ENCODE measurements at regions of chr2 and their contacts with region 1.

Region 1: DNA sequence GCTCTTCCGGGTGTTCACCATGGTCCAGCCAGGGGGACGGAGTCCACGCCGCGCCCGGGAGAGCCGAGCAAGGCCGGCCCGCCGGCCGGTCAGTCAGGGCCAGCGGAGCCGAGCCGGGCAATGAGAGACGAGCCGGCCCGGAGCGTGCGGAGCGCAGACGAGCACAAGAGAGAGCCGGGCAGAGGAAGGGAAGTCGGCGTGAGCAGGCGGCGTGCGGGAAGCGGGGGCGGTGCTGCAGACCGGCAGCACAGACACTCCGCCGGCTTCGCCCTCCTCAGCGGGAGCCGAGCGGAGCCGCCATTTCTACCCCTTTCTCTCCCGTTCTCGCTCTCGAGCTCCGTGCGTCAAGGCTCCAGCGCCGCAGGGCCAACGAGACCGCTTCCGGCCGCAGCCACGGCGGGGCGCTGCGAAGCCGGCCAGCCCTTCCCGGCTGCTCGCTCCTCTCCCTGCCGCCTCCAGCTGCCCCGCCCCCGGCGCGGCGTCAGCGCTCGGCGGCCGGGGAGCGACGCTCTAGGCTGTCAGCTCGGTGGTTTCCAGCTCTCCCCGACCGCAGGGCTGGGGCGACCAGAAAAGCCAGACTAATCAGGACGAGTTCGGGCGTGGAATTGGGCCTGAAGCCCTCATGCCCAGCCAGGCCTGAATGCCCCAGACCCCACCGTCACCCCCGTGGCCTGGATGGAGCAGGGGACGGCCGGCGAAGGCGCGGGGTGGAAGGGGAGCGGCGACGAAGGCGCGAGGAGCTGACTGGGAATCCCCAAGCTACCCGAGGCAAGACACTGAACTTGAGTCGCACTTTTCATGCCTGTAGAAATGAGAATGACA is at the start of gene ATAD2B:
- DNase-seq: peak; percentile 99
- H3K4me3 ChIP-seq: peak within 1 kb of the TSS; percentile 84 to 97
- H3K27ac ChIP-seq: peak within 1 kb of the TSS; percentile 94 to 95
- H3K4me1 ChIP-seq: peaks cover 8 to 13% of the 10 kb centered on the region in 2 experiments; a peak in 3 of 4 replicates
- H3K27me3 ChIP-seq: no peaks in the 10 kb centered on the region
- CTCF ChIP-seq: peak; percentile 87
- EP300 ChIP-seq: peak; percentile 23 to 58; a peak in 3 of 4 replicates
- RAD21 ChIP-seq: peak; percentile 84
- polyA plus RNA-seq, gene ATAD2B: 1.3 and 1.7 TPM in 2 replicates

Region 2: GRCh38 chr2:23835988-23836387 is 91.0 kb before region 1 on chr2:
- CTCF ChIA-PET with region 1: interaction called, 10 read pairs
- POLR2A ChIA-PET with region 1: no interaction called
- DNase-seq: no peak
- H3K4me3 ChIP-seq: no peak overlapping the region
- H3K27ac ChIP-seq: no peak overlapping the region
- H3K4me1 ChIP-seq: no peaks in the 10 kb centered on the region
- H3K27me3 ChIP-seq: no peaks in the 10 kb centered on the region
- CTCF ChIP-seq: no peak
- EP300 ChIP-seq: no peak
- RAD21 ChIP-seq: no peak

Region 3: GRCh38 chr2:23916727-23917405 is 10.1 kb before region 1 on chr2:
- CTCF ChIA-PET with region 1: interaction called, 11 read pairs
- POLR2A ChIA-PET with region 1: no interaction called
- DNase-seq: peak; percentile 39
- H3K4me3 ChIP-seq: no peak overlapping the region
- H3K27ac ChIP-seq: peak overlapping the region; percentile 49 to 55
- H3K4me1 ChIP-seq: peaks cover 4 to 12% of the 10 kb centered on the region in 2 experiments
- H3K27me3 ChIP-seq: no peaks in the 10 kb centered on the region
- CTCF ChIP-seq: no peak
- EP300 ChIP-seq: no peak
- RAD21 ChIP-seq: no peak

Region 4: DNA sequence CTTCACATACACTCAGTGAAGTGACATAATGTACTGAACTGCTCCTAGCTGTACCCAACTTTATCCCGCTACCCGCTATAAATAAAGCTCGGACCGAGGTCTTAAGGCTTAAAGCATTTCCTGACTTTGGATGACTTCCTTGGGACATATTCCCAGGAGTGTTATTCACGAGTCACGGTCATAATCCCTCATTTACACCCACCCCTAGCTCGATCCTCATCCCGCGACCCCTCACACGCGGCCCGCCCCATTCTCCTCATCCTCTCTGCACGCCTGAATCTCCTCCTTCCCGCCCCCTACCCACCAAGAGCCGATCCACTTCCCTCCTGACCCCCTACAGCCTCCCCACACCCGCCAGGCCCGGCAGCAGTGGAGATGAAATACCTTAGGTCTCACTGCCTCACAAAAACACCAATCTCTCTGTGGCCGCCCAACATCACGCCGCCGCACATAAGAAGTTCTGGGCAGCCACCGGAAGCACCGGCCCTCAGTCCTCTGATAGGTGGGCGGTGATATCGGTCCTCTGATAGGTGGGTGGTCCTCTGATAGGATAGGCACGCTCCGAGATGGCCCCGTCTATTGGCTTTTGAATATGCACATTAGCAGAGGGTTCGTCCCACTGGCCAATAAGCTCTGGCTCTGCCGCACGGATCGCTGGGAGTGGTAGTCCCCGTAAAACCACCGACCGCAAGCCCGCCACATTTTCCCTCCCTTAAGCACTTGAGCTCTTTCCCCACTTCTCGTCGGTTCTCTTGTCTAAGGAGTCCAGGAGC is 120.2 kb after region 1 on chr2 and contains the start of gene WDCP:
- CTCF ChIA-PET with region 1: interaction called, 38 read pairs
- POLR2A ChIA-PET with region 1: interaction called, 13 read pairs
- DNase-seq: peak; percentile 93
- H3K4me3 ChIP-seq: peak within 1 kb of the TSS; percentile 75 to 89
- H3K27ac ChIP-seq: peak within 1 kb of the TSS; percentile 54 to 74; a peak in 3 of 4 replicates
- H3K4me1 ChIP-seq: peaks cover 3 to 16% of the 10 kb centered on the region in 2 experiments; a peak in 2 of 4 replicates
- H3K27me3 ChIP-seq: no peaks in the 10 kb centered on the region
- CTCF ChIP-seq: no peak
- EP300 ChIP-seq: no peak
- RAD21 ChIP-seq: no peak
- polyA plus RNA-seq, gene WDCP: 7.1 and 11.9 TPM in 2 replicates

Region 5: DNA sequence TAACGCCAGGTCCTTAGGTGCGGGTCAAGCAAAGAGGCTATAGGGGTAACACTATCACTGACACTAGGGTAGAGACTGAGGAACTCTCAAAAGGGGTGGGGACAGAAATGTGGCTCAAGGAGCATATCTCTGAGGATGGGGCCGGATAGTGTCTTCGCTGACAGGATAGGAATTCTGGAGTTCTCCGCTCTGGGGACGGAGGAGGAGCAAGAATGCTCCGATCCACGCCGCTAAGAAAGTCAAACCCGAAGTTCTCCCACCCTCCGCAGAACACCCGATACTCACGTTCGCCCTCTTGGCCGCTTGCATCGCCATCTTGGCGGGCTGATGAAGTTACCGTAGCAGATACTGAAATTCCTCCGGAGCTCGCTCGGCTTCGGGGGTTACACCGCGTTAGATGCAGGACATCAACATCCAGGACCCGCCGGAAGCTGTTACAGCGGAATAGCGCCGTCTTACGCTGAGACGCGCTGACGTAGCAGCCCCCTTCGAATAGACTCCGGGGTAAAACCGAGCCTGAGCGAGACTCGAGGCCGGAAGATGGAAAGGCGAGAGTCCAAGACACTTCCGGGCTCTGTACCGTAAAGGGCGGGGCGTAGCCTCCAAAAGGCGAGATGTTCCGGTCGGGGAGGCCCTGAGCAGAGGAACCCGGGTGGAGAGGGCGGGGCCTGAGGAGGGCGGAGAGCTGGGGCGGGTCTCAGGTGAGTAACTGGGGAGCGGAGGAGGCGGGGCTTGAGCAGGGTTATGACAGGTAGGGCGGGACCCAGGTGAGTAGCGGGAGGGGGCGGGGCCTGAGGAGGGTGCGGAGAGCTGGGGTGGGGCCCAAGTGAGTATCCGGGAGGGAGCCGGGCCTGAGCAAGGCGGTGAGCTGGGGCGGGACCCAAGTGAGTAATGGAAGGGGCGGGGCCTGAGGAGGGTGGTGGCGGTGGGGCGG is 149.2 kb after region 1 on chr2 and contains the start of gene SF3B6:
- CTCF ChIA-PET with region 1: interaction called, 34 read pairs
- POLR2A ChIA-PET with region 1: interaction called, 25 read pairs
- DNase-seq: peak; percentile 96
- H3K4me3 ChIP-seq: peak within 1 kb of the TSS; percentile 82
- H3K27ac ChIP-seq: peak within 1 kb of the TSS; percentile 79 to 91
- H3K4me1 ChIP-seq: peaks cover 7% of the 10 kb centered on the region in 2 experiments; a peak in 2 of 4 replicates
- H3K27me3 ChIP-seq: no peaks in the 10 kb centered on the region
- CTCF ChIP-seq: no peak
- EP300 ChIP-seq: peak; percentile 63 to 67; a peak in 2 of 4 replicates
- RAD21 ChIP-seq: no peak
- polyA plus RNA-seq, gene SF3B6: 275 and 295 TPM in 2 replicates

Measured in SK-N-SH (cell line).